Activated CD4-positive, alpha-beta T cell treated with anti-CD3 and anti-CD28 coated beads for 36 hours (primary cell): ENCODE measurements at regions of chr1 and their contacts with region 1.

Region 1: DNA sequence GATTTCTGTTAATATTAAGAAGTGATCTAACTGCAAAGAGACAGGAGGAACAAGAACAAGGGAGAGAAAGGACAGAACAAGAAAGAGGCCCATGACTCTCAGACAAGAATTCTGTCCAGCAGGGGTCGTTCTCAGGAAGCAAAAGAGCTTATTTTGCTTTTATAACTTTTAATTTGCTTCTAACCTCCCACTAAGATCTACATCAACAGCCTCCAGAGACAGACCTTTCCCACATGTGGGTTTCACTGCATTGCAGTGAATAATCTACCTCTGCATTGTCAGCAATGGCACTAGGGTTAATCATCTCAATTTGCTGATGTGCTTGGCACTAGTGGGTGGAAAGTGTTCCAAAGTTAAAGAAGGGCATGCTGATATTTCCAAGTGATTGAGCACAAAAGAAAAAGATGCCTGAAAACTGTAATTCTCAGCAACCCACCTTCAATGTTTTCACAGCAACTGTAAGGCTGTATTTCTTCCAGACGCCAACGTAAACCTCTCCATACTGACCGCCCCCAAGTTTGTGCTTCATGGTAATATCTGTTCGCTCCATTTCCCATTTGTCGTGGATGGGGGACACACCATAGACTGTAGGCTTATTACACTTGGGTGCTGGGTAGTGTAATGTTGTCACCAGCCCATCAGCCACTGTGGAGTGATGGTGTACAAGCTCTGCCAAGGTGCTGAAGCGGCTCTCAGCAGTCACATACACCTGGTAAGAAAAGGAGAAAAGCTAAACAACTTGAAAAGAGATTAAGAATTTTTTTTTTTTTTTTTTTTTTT is 39.5 kb downstream of the TOR3A start:
- DNase-seq: peak; percentile 64
- ATAC-seq: peak; percentile 69
- H3K4me3 Mint-ChIP-seq: no peak overlapping the region
- H3K27ac Mint-ChIP-seq: no peak overlapping the region
- H3K4me1 Mint-ChIP-seq: peaks cover 6% of the 10 kb centered on the region
- H3K27me3 Mint-ChIP-seq: no peaks in the 10 kb centered on the region

Region 2: GRCh38 chr1:179066471-179066870 is 54.9 kb before region 1 on chr1:
- CTCF ChIA-PET with region 1: no interaction called
- POLR2A ChIA-PET with region 1: no interaction called
- intact Hi-C with region 1: no loop called
- DNase-seq: no peak
- ATAC-seq: no peak
- H3K4me3 Mint-ChIP-seq: no peak overlapping the region
- H3K27ac Mint-ChIP-seq: no peak overlapping the region
- H3K4me1 Mint-ChIP-seq: no peaks in the 10 kb centered on the region
- H3K27me3 Mint-ChIP-seq: no peaks in the 10 kb centered on the region

Region 3: DNA sequence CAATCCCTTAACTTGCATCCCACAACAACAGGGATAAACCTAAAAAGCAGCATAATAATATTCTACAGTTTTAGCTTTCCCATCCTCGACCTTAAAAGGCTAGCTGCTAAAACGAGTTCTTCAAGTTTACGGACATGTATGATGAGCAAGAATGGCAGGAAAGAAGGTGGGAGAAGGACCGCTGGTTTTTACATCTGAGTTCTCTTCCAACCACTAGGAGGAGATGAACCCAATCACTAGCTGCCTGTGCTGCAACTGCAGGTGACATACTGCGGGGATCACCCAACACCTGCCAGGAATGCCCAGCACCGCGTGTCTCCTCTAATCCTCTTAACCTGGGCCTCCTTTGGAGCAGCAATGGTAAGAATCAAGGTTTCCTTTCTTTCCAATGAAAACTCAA is 16.0 kb before region 1 on chr1:
- CTCF ChIA-PET with region 1: interaction called, 13 read pairs
- POLR2A ChIA-PET with region 1: no interaction called
- intact Hi-C with region 1: no loop called
- DNase-seq: peak; percentile 26
- ATAC-seq: peak; percentile 30
- H3K4me3 Mint-ChIP-seq: no peak overlapping the region
- H3K27ac Mint-ChIP-seq: no peak overlapping the region
- H3K4me1 Mint-ChIP-seq: no peaks in the 10 kb centered on the region
- H3K27me3 Mint-ChIP-seq: no peaks in the 10 kb centered on the region

Region 4: GRCh38 chr1:179190861-179191260 is 69.5 kb after region 1 on chr1:
- CTCF ChIA-PET with region 1: interaction called, 3 read pairs
- POLR2A ChIA-PET with region 1: no interaction called
- intact Hi-C with region 1: loop called (anchors 1 kb)
- DNase-seq: no peak
- ATAC-seq: no peak
- H3K4me3 Mint-ChIP-seq: no peak overlapping the region
- H3K27ac Mint-ChIP-seq: peak overlapping the region; percentile 11
- H3K4me1 Mint-ChIP-seq: peaks cover 18% of the 10 kb centered on the region
- H3K27me3 Mint-ChIP-seq: no peaks in the 10 kb centered on the region

Region 5: DNA sequence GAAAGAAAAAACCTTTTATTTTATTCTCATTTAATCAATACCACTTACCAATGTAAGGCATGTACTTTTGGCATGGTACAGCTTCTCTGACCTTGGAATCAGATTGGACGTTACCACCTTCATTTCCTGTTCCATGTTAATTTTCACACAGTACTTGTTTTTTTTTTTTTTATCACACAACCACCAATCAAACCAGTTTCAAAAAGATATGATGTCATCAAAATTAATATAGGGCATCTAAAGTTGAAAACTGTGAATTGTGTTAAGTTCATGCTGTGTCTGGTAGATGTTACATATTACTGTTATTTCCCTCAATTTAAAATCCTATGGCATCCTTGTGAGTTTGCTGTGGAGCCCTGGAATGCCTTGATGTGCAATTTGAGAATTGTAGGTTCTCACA is 369.3 kb after region 1 on chr1:
- CTCF ChIA-PET with region 1: no interaction called
- POLR2A ChIA-PET with region 1: no interaction called
- intact Hi-C with region 1: no loop called
- DNase-seq: no peak
- ATAC-seq: no peak
- H3K4me3 Mint-ChIP-seq: no peak overlapping the region
- H3K27ac Mint-ChIP-seq: no peak overlapping the region
- H3K4me1 Mint-ChIP-seq: no peaks in the 10 kb centered on the region
- H3K27me3 Mint-ChIP-seq: no peaks in the 10 kb centered on the region